Activated T-helper 1 cell treated with anti-CD3 and anti-CD28 coated beads, Interleukin-12 subunit alpha, Interleukin-12 subunit beta, Interleukin-2, Interleukin-4 antibody, amounts not matched to agents 30 ng/mL and 10 ng/mL and 1 ng/mL, durations not matched to agents 14 hours and 24 hours and 36 hours (primary cell): ENCODE measurements at regions of chr10 and their contacts with region 1.

Region 1: DNA sequence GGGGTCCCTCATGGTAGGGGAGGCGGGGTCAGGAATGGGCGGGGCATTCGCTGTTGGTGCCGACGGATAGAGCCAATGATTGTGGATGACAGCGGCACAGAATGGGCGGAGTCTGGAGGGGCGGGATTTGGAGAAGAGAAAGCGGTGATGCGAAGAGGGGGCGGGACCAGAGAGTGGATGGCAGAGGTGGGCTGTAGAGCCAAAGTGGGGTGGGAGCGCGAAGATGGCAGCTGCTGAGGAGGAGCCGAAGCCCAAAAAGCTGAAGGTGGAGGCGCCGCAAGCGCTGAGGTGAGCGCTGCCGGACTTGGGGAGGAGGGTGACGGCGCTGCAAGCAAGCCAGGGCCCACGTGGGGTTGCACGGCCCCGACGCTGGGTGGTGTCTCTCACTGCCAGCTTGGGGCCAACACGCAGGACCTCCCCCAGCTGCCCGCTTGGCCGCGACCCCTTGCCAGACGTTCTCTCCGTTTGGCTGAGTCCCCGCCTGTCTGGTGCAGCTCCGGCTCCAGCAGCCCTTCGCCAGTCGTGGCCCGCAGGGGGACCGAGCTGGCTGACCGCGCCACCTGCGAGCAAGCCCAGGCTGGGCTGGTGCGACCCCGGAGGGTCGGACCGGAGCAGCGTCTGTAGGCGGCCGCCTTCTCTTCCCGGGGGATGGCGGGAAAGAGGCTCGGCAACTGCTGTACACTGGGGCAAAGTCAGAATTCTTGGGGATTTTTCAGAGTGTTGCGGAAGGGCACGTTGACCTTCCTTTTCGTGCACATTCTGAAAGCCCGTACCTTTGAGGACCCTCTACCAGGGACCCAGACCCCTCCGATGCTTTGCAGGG is at the start of gene ADK:
- DNase-seq: peak; percentile 99
- H3K4me3 Mint-ChIP-seq: no peak within 1 kb of the TSS
- H3K27ac Mint-ChIP-seq: peak within 1 kb of the TSS; percentile 69
- H3K4me1 Mint-ChIP-seq: peaks cover 29% of the 10 kb centered on the region
- H3K27me3 Mint-ChIP-seq: no peaks in the 10 kb centered on the region
- total RNA-seq, gene ADK: 47.4 and 50.8 TPM in 2 replicates

Region 2: DNA sequence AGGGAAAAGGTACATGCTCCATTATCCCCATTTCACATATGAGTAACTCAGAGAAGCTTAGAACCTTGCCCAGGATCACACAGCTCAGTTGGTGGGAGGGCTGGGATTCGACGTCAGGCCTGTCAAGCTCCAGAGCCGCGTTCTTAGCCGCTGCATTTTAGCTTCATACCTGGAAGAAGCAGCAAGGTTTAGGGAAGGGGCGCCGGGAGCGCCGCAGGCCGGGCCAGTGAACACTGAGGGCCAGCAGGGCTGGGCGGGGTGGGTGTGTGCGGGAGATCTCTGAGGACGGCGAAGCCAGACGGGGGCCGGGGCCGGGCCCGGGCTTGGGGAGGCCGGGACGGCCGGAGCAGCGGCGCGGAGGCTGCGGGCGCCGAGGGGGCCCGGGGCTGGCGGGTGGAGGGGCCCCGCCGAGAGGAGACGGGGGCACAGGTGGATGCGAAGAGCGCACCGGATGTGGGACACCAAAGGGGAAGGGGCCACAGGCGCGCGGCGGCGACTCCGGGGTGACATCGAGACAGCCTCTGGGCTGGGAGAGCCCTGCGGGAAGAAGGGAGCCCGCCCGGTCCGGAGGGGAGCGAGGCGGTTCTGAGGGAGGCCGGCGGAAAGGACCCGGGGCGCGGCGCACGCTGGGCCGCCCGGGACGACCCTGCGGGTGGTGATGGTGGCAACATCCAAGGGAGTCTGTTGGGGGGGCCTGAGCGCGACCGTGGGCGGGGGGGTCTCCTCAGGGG is 340.4 kb before region 1 on chr10:
- intact Hi-C with region 1: loop called (anchors 1 kb)
- DNase-seq: peak; percentile 54
- H3K4me3 Mint-ChIP-seq: peak overlapping the region; percentile 97
- H3K27ac Mint-ChIP-seq: peak overlapping the region; percentile 98
- H3K4me1 Mint-ChIP-seq: peaks cover 50% of the 10 kb centered on the region
- H3K27me3 Mint-ChIP-seq: no peaks in the 10 kb centered on the region

Region 3: GRCh38 chr10:74176380-74177139 is 25.3 kb after region 1 on chr10:
- intact Hi-C with region 1: loop called (anchors 1 kb)
- DNase-seq: peak; percentile 93
- H3K4me3 Mint-ChIP-seq: peak overlapping the region; percentile 93
- H3K27ac Mint-ChIP-seq: peak overlapping the region; percentile 88
- H3K4me1 Mint-ChIP-seq: peaks cover 45% of the 10 kb centered on the region
- H3K27me3 Mint-ChIP-seq: no peaks in the 10 kb centered on the region

Region 4: DNA sequence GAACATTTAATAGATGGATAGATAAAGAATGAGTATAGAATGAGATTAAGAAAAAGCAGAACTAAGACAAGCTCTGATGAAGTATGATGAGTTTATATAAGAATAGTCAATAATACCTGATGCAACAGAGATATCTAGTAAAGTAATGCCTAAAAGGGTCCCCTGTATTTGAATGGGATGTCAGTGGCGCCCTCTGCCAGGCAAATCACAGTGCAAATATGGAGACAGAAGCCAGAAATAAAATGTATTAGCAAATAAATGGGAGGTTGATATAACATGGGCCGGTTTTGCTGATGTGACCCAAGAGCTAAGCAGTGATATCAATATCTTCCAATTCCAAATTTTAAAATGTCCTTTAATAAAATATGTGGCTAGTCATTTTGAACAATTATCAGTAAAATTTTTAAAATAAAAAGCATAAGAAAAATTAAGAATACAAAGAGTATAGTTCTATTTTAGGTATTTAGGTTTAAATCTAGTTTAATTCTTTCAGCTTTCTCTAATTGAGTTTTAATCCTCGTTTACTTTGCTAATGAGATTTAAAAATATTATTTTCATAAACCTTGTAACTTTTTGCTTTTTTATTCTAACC is 62.4 kb after region 1 on chr10:
- intact Hi-C with region 1: loop called (anchors 1 kb)
- DNase-seq: no peak
- H3K4me3 Mint-ChIP-seq: no peak overlapping the region
- H3K27ac Mint-ChIP-seq: no peak overlapping the region
- H3K4me1 Mint-ChIP-seq: no peaks in the 10 kb centered on the region
- H3K27me3 Mint-ChIP-seq: no peaks in the 10 kb centered on the region

Region 5: DNA sequence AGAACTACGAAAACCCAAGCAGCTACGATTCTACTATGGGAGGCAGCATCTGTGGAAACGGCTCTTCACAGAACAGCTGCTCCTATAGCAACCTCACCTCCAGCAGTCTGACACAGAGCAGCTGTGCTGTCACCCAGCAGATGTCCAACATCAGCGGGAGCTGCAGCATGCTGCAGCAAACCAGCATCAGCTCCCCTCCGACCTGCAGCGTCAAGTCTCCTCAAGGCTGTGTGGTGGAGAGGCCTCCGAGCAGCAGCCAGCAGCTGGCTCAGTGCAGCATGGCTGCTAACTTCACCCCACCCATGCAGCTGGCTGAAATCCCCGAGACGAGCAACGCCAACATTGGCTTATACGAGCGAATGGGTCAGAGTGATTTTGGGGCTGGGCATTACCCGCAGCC is 878.6 kb after region 1 on chr10:
- intact Hi-C with region 1: loop called (anchors 5 kb)
- DNase-seq: no peak
- H3K4me3 Mint-ChIP-seq: no peak overlapping the region
- H3K27ac Mint-ChIP-seq: peak overlapping the region; percentile 5
- H3K4me1 Mint-ChIP-seq: peaks cover 22% of the 10 kb centered on the region
- H3K27me3 Mint-ChIP-seq: no peaks in the 10 kb centered on the region

Region 6: GRCh38 chr10:75210282-75211006 is 1059.2 kb after region 1 on chr10 and contains the start of gene VDAC2:
- intact Hi-C with region 1: loop called (anchors 1 kb)
- DNase-seq: peak; percentile 95
- H3K4me3 Mint-ChIP-seq: peak within 1 kb of the TSS; percentile 92
- H3K27ac Mint-ChIP-seq: peak within 1 kb of the TSS; percentile 100
- H3K4me1 Mint-ChIP-seq: peaks cover 30% of the 10 kb centered on the region
- H3K27me3 Mint-ChIP-seq: no peaks in the 10 kb centered on the region
- total RNA-seq, gene VDAC2: 220 and 224 TPM in 2 replicates